SK-N-SH (cell line): ENCODE measurements at regions of chr10 and their contacts with region 1.

Region 1: GRCh38 chr10:6401562-6402348 is 178.3 kb downstream of the PRKCQ start:
- DNase-seq: peak; percentile 82
- H3K4me3 ChIP-seq: peak overlapping the region; percentile 36 to 40; a peak in 3 of 4 replicates
- H3K27ac ChIP-seq: peak overlapping the region; percentile 23 to 78; a peak in 3 of 4 replicates
- H3K4me1 ChIP-seq: peaks cover 0 to 7% of the 10 kb centered on the region in 2 experiments; a peak in 1 of 4 replicates
- H3K27me3 ChIP-seq: no peaks in the 10 kb centered on the region
- CTCF ChIP-seq: peak; percentile 91
- EP300 ChIP-seq: no peak
- RAD21 ChIP-seq: peak; percentile 93

Region 2: DNA sequence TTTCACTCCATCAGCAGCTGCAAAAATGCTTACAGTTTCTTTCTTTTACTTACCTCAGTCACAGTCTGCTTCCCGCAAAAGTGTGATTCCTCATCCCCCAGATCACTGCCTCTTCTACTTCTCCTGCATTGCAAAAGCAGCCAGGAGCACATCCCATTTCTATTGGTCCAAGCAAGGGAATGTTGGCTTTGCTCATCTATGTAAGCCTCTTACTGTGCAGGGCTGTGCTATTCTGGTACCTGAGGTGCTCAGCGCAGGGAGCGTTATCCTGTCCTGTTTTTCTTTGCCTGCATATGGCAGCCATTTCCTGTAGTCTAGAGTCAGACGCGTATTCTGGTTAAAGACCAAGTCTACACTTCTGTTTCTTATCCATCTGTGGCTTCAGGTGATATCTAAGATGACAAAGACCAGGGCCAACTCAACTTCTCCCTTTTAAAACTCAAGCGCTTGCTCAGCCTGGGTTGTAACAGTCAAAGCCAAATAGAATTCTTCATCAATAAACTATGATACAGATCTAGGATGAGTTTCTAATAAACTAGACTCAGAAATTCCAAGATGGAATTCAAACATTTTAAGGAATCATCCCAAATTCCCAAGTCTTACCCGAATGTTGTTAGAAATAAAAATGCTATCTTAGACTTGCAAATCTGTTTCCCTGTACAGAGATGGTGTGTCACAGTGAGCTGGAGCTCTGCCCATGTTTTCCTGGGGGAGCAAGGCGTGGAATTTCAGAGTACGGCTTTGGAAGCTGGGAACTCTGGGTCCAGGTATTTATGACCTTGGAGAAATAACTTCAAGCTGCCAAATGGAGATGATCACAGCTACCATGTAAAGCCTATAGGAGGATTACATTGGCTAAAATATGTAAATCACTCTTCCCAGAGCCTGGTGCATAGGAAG is 319.0 kb before region 1 on chr10:
- CTCF ChIA-PET with region 1: interaction called, 57 read pairs
- POLR2A ChIA-PET with region 1: no interaction called
- DNase-seq: no peak
- H3K4me3 ChIP-seq: no peak overlapping the region
- H3K27ac ChIP-seq: no peak overlapping the region
- H3K4me1 ChIP-seq: peaks cover 0 to 3% of the 10 kb centered on the region in 2 experiments; a peak in 1 of 4 replicates
- H3K27me3 ChIP-seq: peaks cover 19% of the 10 kb centered on the region; the same call in 1 of the 2 replicates
- CTCF ChIP-seq: no peak
- EP300 ChIP-seq: no peak
- RAD21 ChIP-seq: no peak

Region 3: GRCh38 chr10:6108603-6109443 is 292.9 kb before region 1 on chr10:
- CTCF ChIA-PET with region 1: interaction called, 75 read pairs
- POLR2A ChIA-PET with region 1: interaction called, 3 read pairs
- DNase-seq: peak; percentile 64
- H3K4me3 ChIP-seq: no peak overlapping the region
- H3K27ac ChIP-seq: no peak overlapping the region
- H3K4me1 ChIP-seq: no peaks in the 10 kb centered on the region
- H3K27me3 ChIP-seq: no peaks in the 10 kb centered on the region
- CTCF ChIP-seq: peak; percentile 80
- EP300 ChIP-seq: no peak
- RAD21 ChIP-seq: peak; percentile 73

Region 4: GRCh38 chr10:6176691-6177231 is 225.0 kb before region 1 on chr10:
- CTCF ChIA-PET with region 1: interaction called, 12 read pairs
- POLR2A ChIA-PET with region 1: no interaction called
- DNase-seq: peak; percentile 6
- H3K4me3 ChIP-seq: no peak overlapping the region
- H3K27ac ChIP-seq: peak overlapping the region in 1 of 2 experiments; percentile 34; a peak in 1 of 4 replicates
- H3K4me1 ChIP-seq: peaks cover 0 to 6% of the 10 kb centered on the region in 2 experiments; a peak in 2 of 4 replicates
- H3K27me3 ChIP-seq: no peaks in the 10 kb centered on the region
- CTCF ChIP-seq: no peak
- EP300 ChIP-seq: no peak
- RAD21 ChIP-seq: no peak

Region 5: GRCh38 chr10:6218692-6219493 is 182.9 kb before region 1 on chr10:
- CTCF ChIA-PET with region 1: interaction called, 10 read pairs
- POLR2A ChIA-PET with region 1: no interaction called
- DNase-seq: no peak
- H3K4me3 ChIP-seq: no peak overlapping the region
- H3K27ac ChIP-seq: peak overlapping the region in 1 of 2 experiments; percentile 61; a peak in 2 of 4 replicates
- H3K4me1 ChIP-seq: peaks cover 0 to 27% of the 10 kb centered on the region in 2 experiments; a peak in 3 of 4 replicates
- H3K27me3 ChIP-seq: no peaks in the 10 kb centered on the region
- CTCF ChIP-seq: no peak
- EP300 ChIP-seq: no peak
- RAD21 ChIP-seq: no peak

Region 6: DNA sequence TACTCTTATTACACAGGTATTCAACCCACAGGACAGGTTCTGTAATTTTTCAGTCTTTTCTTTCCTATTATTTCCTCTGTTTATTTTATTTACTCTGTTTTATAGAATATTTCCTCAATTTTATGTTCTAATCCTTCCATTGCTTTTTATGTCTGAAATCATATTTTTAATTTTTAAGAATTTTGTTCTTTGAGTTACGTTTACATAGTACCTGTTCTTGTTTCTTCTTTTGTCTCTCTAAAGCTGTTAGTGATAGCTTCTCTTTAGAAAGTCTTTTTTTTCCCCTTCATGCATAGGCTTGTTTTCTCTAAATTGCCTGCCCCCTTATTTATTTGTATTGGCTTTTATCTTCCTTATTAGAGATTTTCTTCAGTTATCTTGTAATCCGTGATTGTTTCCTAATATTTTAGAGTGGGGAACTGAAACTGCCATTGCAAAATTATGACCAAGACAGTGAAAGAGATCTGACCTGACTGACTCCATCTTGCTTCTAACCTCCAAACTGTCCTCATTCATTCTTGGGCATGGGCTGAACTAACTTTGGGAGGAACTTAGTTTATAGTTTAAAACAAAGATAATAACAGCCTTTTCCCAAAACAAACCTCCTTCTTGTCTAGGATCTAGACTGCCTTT is 11.4 kb before region 1 on chr10:
- CTCF ChIA-PET with region 1: interaction called, 25 read pairs
- POLR2A ChIA-PET with region 1: no interaction called
- DNase-seq: no peak
- H3K4me3 ChIP-seq: no peak overlapping the region
- H3K27ac ChIP-seq: no peak overlapping the region
- H3K4me1 ChIP-seq: no peaks in the 10 kb centered on the region; a peak in 1 of 4 replicates
- H3K27me3 ChIP-seq: no peaks in the 10 kb centered on the region
- CTCF ChIP-seq: no peak
- EP300 ChIP-seq: no peak
- RAD21 ChIP-seq: no peak

Region 7: GRCh38 chr10:6431861-6432260 is 30.1 kb after region 1 on chr10:
- CTCF ChIA-PET with region 1: no interaction called
- POLR2A ChIA-PET with region 1: no interaction called
- DNase-seq: no peak
- H3K4me3 ChIP-seq: no peak overlapping the region
- H3K27ac ChIP-seq: no peak overlapping the region
- H3K4me1 ChIP-seq: no peaks in the 10 kb centered on the region
- H3K27me3 ChIP-seq: peaks cover 11% of the 10 kb centered on the region; the same call in 1 of the 2 replicates
- CTCF ChIP-seq: no peak
- EP300 ChIP-seq: no peak
- RAD21 ChIP-seq: no peak